WTC11 (cell line): ENCODE measurements at regions of chr2 and their contacts with region 1.

Region 1: GRCh38 chr2:72862239-72862988 is 24.8 kb upstream of the SPR start:
- DNase-seq: peak; percentile 96
- ATAC-seq: peak; percentile 92
- H3K4me3 Mint-ChIP-seq: peak overlapping the region; percentile 73
- H3K27ac Mint-ChIP-seq: no peak overlapping the region
- H3K4me1 Mint-ChIP-seq: peaks cover 20% of the 10 kb centered on the region
- H3K27me3 Mint-ChIP-seq: peaks cover 16% of the 10 kb centered on the region
- CTCF ChIP-seq: peak; percentile 98

Region 2: DNA sequence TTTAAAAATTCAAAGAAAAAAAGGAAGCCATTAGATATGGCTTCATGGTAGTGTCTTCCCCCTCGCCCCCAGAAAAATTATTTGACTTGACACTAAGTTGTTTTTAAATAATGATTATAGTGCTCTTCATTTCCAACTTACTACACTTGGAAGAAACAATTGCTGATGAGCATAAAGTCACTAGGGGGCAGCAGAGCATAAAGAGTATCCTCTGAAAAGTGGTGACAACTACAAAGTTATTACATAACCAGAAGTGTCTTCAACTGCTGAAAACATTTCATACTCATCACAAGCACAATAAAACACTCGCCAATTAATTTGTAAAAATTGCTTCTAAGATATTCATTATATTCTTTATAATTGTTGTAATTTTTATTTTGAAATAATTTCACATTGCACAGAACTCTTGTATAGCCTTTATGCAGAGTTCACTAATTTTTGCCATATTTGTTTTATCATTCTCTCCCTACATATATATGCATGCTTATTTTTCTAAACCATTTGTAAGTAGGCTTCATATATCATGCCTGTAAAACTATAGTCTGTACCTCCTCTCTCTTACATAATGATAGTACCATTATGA is 91.4 kb before region 1 on chr2:
- CTCF ChIA-PET with region 1: interaction called, 21 read pairs
- POLR2A ChIA-PET with region 1: interaction called, 3 read pairs
- DNase-seq: peak; percentile 45
- ATAC-seq: no peak
- H3K4me3 Mint-ChIP-seq: no peak overlapping the region
- H3K27ac Mint-ChIP-seq: no peak overlapping the region
- H3K4me1 Mint-ChIP-seq: peaks cover 18% of the 10 kb centered on the region
- H3K27me3 Mint-ChIP-seq: no peaks in the 10 kb centered on the region
- CTCF ChIP-seq: peak; percentile 61; the same call in 1 of the 2 replicates

Region 3: GRCh38 chr2:72780477-72780876 is 81.9 kb before region 1 on chr2:
- CTCF ChIA-PET with region 1: interaction called, 11 read pairs
- POLR2A ChIA-PET with region 1: no interaction called
- DNase-seq: no peak
- ATAC-seq: no peak
- H3K4me3 Mint-ChIP-seq: no peak overlapping the region
- H3K27ac Mint-ChIP-seq: no peak overlapping the region
- H3K4me1 Mint-ChIP-seq: peaks cover 16% of the 10 kb centered on the region
- H3K27me3 Mint-ChIP-seq: no peaks in the 10 kb centered on the region
- CTCF ChIP-seq: no peak

Region 4: GRCh38 chr2:72793798-72794440 is 68.5 kb before region 1 on chr2:
- CTCF ChIA-PET with region 1: interaction called, 15 read pairs
- POLR2A ChIA-PET with region 1: no interaction called
- DNase-seq: no peak
- ATAC-seq: no peak
- H3K4me3 Mint-ChIP-seq: no peak overlapping the region
- H3K27ac Mint-ChIP-seq: no peak overlapping the region; the same call in 1 of the 2 replicates
- H3K4me1 Mint-ChIP-seq: peaks cover 6% of the 10 kb centered on the region
- H3K27me3 Mint-ChIP-seq: no peaks in the 10 kb centered on the region
- CTCF ChIP-seq: no peak

Region 5: DNA sequence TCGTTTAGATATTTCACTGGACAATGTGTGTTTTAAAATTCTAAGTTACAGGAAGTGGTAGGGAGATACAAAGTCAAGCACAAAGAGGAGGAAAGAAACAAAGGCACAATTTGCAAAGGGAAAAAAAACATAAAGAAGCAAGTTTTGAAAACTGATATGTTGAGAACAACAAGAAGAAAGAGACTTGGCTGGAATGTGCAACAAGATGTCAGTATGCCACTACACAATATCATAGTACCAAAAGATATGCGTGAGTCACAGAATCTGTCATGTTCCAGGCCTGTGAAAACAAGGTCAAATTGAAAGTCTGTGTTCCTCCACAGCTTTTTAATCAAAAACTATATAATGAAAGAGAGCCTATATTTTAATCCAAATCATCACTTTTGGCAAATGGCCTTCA is 48.6 kb before region 1 on chr2:
- CTCF ChIA-PET with region 1: interaction called, 55 read pairs
- POLR2A ChIA-PET with region 1: interaction called, 3 read pairs
- DNase-seq: no peak
- ATAC-seq: no peak
- H3K4me3 Mint-ChIP-seq: no peak overlapping the region
- H3K27ac Mint-ChIP-seq: no peak overlapping the region
- H3K4me1 Mint-ChIP-seq: peaks cover 6% of the 10 kb centered on the region; the same call in 1 of the 2 replicates
- H3K27me3 Mint-ChIP-seq: no peaks in the 10 kb centered on the region; the same call in 1 of the 2 replicates
- CTCF ChIP-seq: no peak

Region 6: GRCh38 chr2:72851321-72851720 is 11.1 kb before region 1 on chr2:
- CTCF ChIA-PET with region 1: interaction called, 13 read pairs
- POLR2A ChIA-PET with region 1: no interaction called
- DNase-seq: no peak
- ATAC-seq: peak; percentile 36
- H3K4me3 Mint-ChIP-seq: no peak overlapping the region
- H3K27ac Mint-ChIP-seq: no peak overlapping the region
- H3K4me1 Mint-ChIP-seq: no peaks in the 10 kb centered on the region
- H3K27me3 Mint-ChIP-seq: no peaks in the 10 kb centered on the region
- CTCF ChIP-seq: no peak

Region 7: DNA sequence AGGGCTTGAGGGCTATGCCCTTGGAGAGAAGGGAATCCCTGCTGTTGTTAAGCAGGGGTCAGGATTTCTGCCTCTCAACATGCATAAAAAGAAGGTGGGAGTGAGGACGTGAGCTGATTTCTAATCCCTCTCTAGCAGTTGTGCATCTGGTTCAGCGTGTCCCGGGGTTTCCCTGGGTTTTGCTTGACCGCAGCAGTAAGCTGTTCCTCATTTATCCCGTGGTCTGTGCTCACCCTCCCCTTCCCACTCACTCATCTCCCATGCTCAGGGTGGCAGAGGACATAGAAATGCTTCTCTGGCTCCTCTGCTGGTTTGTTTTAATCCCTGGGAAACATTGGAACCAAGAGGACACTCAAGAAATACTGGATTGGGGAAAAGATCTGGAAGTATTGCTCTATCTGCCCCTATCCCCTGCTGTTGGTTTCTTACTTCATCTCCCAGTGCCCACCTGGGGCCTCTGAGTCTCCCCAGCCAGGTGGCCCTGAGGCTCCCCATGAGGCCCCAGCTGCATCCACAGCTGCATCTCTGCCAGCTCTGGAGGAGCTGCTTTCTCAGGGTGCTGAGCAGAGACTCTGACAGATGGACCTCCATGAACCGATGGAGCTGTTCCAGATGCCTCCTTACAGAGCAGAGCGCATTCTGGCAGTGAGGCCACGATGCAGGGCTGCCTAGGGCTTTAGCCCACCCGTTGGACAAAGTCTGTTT is 1158.4 kb after region 1 on chr2:
- CTCF ChIA-PET with region 1: no interaction called
- POLR2A ChIA-PET with region 1: interaction called, 10 read pairs
- DNase-seq: no peak
- ATAC-seq: no peak
- H3K4me3 Mint-ChIP-seq: no peak overlapping the region
- H3K27ac Mint-ChIP-seq: peak overlapping the region; percentile 69; the same call in 1 of the 2 replicates
- H3K4me1 Mint-ChIP-seq: peaks cover 35% of the 10 kb centered on the region
- H3K27me3 Mint-ChIP-seq: no peaks in the 10 kb centered on the region
- CTCF ChIP-seq: no peak